ENCODE measurements at regions of chr14 and their contacts with region 1.

Region 1: GRCh38 chr14:86961106-86961716 is 1031.8 kb downstream of the GALC start:
- DNase-seq: peak; percentile 39
- H3K4me3 ChIP-seq: no peak overlapping the region
- H3K27ac ChIP-seq: no peak overlapping the region
- H3K4me1 ChIP-seq: no peaks in the 10 kb centered on the region
- H3K27me3 ChIP-seq: no peaks in the 10 kb centered on the region

Region 2: GRCh38 chr14:86824167-86824566 is 137.0 kb before region 1 on chr14:
- in situ Hi-C with region 1: no loop called
- DNase-seq: no peak
- H3K4me3 ChIP-seq: no peak overlapping the region
- H3K27ac ChIP-seq: no peak overlapping the region
- H3K4me1 ChIP-seq: no peaks in the 10 kb centered on the region
- H3K27me3 ChIP-seq: no peaks in the 10 kb centered on the region

Region 3: GRCh38 chr14:87615822-87616679 is 654.8 kb after region 1 on chr14:
- in situ Hi-C with region 1: loop called (anchors 25 kb)
- DNase-seq: peak; percentile 52
- H3K4me3 ChIP-seq: no peak overlapping the region
- H3K27ac ChIP-seq: no peak overlapping the region
- H3K4me1 ChIP-seq: no peaks in the 10 kb centered on the region
- H3K27me3 ChIP-seq: no peaks in the 10 kb centered on the region

Measured in GM23248 (cell line).